Gastrocnemius medialis (tissue), 4 donors: ENCODE measurements at regions of chr7 and their contacts with region 1.

Region 1: GRCh38 chr7:77752021-77752420 is 46.2 kb downstream of the TMEM60 start:
- DNase-seq: no peak
- ATAC-seq: peak in 1 of 2 donors; percentile 67
- H3K4me3 ChIP-seq: no peak overlapping the region
- H3K27ac ChIP-seq: peak overlapping the region in 2 of 4 donors; percentile 9 to 13
- H3K4me1 ChIP-seq: peaks cover 24 to 25% of the 10 kb centered on the region in 2 donors
- H3K27me3 ChIP-seq: no peaks in the 10 kb centered on the region
- CTCF ChIP-seq: no peak
- POLR2A ChIP-seq: no peak

Region 2: DNA sequence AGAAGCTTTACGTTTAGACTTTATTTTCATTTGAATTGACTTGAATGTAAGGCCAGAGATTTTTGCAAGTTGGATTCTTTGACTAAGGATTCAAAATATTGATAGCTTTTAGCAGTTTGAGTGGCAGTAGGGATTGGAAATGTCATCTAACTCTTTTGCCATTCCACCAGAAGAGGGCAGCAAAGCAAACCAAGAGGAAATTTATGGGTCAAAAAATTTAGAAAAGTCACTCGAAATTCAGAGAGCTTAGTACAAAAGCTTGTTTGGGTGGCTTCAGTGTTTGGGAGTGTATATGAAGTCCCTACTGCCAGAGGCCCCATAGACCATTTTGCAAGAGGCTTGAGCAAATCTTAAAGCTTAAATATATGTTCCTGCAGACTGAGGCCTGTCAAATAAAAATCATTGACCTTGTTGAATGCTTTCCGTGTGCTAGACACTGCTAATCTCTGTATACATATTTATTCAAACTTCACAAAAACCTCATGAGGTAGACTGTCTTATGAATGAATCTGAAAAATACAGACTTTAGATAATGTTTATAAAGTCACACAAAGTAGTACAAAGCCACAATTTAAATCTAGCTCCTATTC is 100.4 kb before region 1 on chr7:
- in situ Hi-C with region 1: loop called in 3 of 4 experiments (anchors 5 to 10 kb)
- intact Hi-C with region 1: no loop called
- DNase-seq: no peak
- ATAC-seq: peak in 1 of 2 donors; percentile 39
- H3K4me3 ChIP-seq: no peak overlapping the region
- H3K27ac ChIP-seq: no peak overlapping the region
- H3K4me1 ChIP-seq: no peaks in the 10 kb centered on the region
- H3K27me3 ChIP-seq: no peaks in the 10 kb centered on the region
- CTCF ChIP-seq: peak; percentile 53 to 76 (median 65)
- POLR2A ChIP-seq: no peak

Region 3: GRCh38 chr7:77657427-77658224 is 94.4 kb before region 1 on chr7:
- in situ Hi-C with region 1: loop called (anchors 5 to 10 kb)
- intact Hi-C with region 1: no loop called
- DNase-seq: no peak
- ATAC-seq: peak in 1 of 2 donors; percentile 74
- H3K4me3 ChIP-seq: no peak overlapping the region
- H3K27ac ChIP-seq: no peak overlapping the region
- H3K4me1 ChIP-seq: no peaks in the 10 kb centered on the region
- H3K27me3 ChIP-seq: no peaks in the 10 kb centered on the region
- CTCF ChIP-seq: peak; percentile 14 to 66 (median 40)
- POLR2A ChIP-seq: no peak

Region 4: DNA sequence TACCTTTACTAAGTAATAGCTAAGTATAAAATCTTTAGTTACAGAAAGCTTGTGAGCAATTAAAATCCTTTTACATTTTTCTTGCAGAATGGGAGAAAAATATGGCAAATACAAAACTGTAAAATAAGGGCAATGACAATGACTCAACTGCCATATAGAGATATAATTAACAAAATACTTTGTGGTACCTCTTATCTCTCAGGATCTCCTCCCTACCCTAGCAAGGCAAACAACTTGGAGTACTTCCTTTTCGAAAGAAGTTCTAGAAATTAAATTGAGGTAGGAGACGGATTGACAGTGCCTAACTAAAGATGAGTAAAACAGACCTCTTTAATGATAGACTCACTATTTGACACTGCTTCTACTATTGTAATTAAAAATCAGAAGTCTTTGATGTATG is 28.5 kb after region 1 on chr7:
- in situ Hi-C with region 1: no loop called
- intact Hi-C with region 1: no loop called
- DNase-seq: no peak
- ATAC-seq: no peak
- H3K4me3 ChIP-seq: no peak overlapping the region
- H3K27ac ChIP-seq: no peak overlapping the region
- H3K4me1 ChIP-seq: peaks cover 5 to 10% of the 10 kb centered on the region in 2 donors
- H3K27me3 ChIP-seq: no peaks in the 10 kb centered on the region
- CTCF ChIP-seq: no peak
- POLR2A ChIP-seq: no peak

Region 5: DNA sequence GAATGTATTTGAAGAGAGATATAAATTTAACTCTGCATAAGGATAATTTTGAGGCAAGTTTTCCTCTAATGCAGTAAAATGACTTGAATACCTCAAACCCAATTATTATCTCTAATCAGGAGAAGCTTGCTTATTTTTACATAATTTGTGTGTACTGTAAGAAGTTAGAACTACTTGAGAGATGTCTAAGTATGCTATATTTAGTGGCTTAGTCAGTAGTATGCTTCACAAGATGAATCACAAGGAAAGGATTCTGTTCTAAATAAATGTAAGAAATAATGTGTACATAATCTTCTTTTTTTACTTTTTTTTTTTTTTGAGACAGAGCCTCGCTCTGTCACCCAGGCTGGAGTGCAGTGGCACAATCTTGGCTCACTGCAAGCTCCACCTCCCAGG is 60.3 kb after region 1 on chr7:
- in situ Hi-C with region 1: no loop called
- intact Hi-C with region 1: no loop called
- DNase-seq: no peak
- ATAC-seq: peak; percentile 92 to 96
- H3K4me3 ChIP-seq: no peak overlapping the region
- H3K27ac ChIP-seq: peak overlapping the region; percentile 56 to 81 (median 68)
- H3K4me1 ChIP-seq: peaks cover 23 to 33% of the 10 kb centered on the region in 2 donors
- H3K27me3 ChIP-seq: no peaks in the 10 kb centered on the region
- CTCF ChIP-seq: no peak
- POLR2A ChIP-seq: no peak